PC-3 (cell line): ENCODE measurements at regions of chr3 and their contacts with region 1.

Region 1: DNA sequence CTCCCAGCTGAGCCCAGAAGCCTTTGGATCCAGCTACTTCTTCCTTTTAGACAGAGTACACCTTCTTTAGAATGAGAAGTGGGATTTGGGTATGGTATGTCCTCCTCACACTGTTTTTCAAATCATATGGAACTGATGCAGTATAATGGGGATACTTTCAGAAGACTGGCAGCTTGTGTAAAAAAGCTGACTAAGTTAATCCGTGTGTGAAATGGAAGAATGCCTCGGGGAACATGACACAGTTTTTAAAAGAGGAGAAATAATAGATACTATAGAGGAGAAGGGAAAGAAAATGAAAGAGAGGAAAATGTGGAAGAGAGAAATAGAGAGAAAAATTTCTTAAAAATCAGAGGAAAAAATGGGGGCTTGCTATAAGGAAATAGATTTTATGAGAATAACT is 47.7 kb downstream of the TUSC7 start:
- DNase-seq: no peak
- ATAC-seq: no peak
- H3K4me3 ChIP-seq: no peak overlapping the region
- H3K27ac ChIP-seq: no peak overlapping the region
- H3K4me1 ChIP-seq: no peaks in the 10 kb centered on the region
- H3K27me3 ChIP-seq: no peaks in the 10 kb centered on the region; the same call in 1 of the 2 replicates
- CTCF ChIP-seq: no peak

Region 2: DNA sequence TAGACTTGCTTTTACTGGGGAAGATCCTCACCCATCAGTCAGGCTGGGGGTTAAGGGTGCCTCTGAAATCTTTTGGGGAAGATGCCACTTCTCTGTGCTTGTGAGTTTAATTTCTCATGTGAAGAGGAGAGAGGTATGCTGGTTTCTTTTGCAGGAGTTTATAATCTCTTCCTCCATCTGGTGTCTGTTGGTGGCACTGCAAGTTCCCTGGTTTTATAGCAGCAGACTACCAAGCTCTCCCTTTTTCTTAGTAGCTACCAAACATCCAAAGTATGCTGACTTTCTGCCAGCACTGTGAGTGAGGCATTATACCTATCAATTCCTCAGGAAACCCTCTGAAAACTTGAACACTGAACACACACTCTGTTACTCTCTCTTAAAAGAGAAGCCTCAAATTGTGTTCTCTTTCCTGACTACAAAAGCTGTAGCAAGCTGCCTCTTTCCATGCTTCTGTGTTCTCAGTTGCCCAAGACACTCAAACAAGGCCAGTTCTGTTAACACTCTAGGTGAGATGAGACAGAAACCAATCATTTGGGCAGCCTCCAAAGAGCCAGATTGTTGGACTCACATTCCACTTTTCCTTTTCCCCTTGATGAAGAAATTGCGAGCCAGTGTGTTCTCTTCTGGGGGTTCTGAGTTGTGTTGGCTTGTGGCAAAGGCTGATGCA is 834.5 kb before region 1 on chr3:
- CTCF ChIA-PET with region 1: no interaction called
- POLR2A ChIA-PET with region 1: no interaction called
- intact Hi-C with region 1: loop called (anchors 5 kb)
- DNase-seq: peak; percentile 53
- ATAC-seq: peak; percentile 86
- H3K4me3 ChIP-seq: no peak overlapping the region
- H3K27ac ChIP-seq: no peak overlapping the region
- H3K4me1 ChIP-seq: no peaks in the 10 kb centered on the region
- H3K27me3 ChIP-seq: no peaks in the 10 kb centered on the region
- CTCF ChIP-seq: peak; percentile 71

Region 3: GRCh38 chr3:115986555-115987207 is 770.6 kb before region 1 on chr3:
- CTCF ChIA-PET with region 1: no interaction called
- POLR2A ChIA-PET with region 1: no interaction called
- intact Hi-C with region 1: loop called (anchors 1 kb)
- DNase-seq: peak; percentile 72
- ATAC-seq: peak; percentile 55
- H3K4me3 ChIP-seq: no peak overlapping the region
- H3K27ac ChIP-seq: no peak overlapping the region
- H3K4me1 ChIP-seq: no peaks in the 10 kb centered on the region
- H3K27me3 ChIP-seq: no peaks in the 10 kb centered on the region
- CTCF ChIP-seq: peak; percentile 81

Region 4: DNA sequence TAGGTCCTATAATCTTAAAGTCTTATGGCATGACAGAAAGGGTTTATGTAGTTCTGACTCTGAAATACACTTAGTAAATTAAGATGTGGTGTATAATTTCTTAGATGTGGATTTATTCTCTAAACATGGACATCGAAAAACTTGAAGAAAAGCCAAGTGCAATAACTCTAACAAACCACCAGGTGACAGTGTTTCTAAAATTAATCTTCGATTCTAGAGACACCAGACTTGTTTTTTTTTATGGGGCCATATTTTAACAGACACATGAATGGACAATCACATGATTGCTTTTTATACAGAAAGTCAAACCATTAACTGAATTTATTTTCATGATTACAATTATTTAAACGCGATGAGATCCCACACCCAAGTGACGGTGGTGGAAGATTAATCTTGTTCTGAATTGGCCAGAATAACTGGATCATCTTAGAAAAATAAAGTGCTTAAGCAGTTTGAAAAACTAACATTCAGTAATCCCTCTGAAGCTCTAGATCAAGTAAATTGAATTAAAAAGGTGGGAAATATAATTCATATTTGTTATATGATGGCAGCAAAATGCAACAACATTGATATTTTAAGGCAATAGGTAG is 617.1 kb before region 1 on chr3:
- CTCF ChIA-PET with region 1: no interaction called
- POLR2A ChIA-PET with region 1: no interaction called
- intact Hi-C with region 1: loop called (anchors 1 kb)
- DNase-seq: peak; percentile 74
- ATAC-seq: no peak
- H3K4me3 ChIP-seq: no peak overlapping the region
- H3K27ac ChIP-seq: no peak overlapping the region
- H3K4me1 ChIP-seq: no peaks in the 10 kb centered on the region
- H3K27me3 ChIP-seq: no peaks in the 10 kb centered on the region
- CTCF ChIP-seq: peak; percentile 88